Posterior cingulate gyrus (tissue), 11 donors: ENCODE measurements at regions of chr2 and their contacts with region 1.

Region 1: GRCh38 chr2:186641807-186642321 is 52.0 kb upstream of the FAM171B start:
- DNase-seq: peak in 4 of 10 donors; percentile 22 to 68 (median 32)

Region 2: GRCh38 chr2:186503848-186504606 is 137.8 kb before region 1 on chr2:
- intact Hi-C with region 1: loop called (anchors 1 kb)
- DNase-seq: no peak

Region 3: GRCh38 chr2:186595219-186595618 is 46.6 kb before region 1 on chr2:
- intact Hi-C with region 1: no loop called
- DNase-seq: no peak